ENCODE measurements at regions of chr7 and their contacts with region 1.

Region 1: DNA sequence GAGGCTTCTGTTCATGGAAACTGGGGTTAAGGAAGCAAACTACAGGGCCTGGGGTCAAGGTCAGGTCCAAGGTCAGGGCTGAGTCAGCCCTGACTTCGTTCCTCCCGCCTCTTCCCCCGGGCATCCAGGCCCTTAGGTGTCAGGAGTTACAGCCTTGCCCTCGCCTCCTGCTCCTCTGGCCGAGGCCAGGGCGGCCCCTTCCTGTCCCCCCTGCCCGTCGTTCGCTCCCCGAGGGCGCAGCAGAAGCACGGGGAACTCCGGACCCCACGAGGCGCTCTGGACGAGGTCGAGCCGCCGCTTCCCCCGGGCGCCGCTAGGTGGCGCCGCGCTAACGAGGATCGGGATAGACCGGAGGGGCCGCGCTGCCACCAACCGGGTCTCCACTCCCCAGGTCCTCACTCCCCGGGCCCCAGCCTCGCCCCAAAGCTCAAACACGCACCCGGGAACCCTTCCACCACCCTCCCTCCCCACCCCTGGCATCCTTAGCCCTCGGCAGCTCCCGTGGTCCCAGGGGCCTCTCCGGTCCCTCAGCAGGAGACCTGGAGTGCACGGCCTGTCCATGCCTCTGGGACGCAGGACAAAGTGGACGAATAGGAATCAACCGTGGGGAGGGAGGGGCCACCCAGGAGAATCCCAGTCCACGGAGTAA is 59.2 kb upstream of the MYL10 start:
- DNase-seq: peak; percentile 89
- ATAC-seq: peak; percentile 92
- H3K4me3 ChIP-seq: no peak overlapping the region
- H3K27ac ChIP-seq: no peak overlapping the region
- H3K4me1 ChIP-seq: peaks cover 9% of the 10 kb centered on the region
- H3K27me3 ChIP-seq: no peaks in the 10 kb centered on the region
- CTCF ChIP-seq: peak; percentile 98

Region 2: DNA sequence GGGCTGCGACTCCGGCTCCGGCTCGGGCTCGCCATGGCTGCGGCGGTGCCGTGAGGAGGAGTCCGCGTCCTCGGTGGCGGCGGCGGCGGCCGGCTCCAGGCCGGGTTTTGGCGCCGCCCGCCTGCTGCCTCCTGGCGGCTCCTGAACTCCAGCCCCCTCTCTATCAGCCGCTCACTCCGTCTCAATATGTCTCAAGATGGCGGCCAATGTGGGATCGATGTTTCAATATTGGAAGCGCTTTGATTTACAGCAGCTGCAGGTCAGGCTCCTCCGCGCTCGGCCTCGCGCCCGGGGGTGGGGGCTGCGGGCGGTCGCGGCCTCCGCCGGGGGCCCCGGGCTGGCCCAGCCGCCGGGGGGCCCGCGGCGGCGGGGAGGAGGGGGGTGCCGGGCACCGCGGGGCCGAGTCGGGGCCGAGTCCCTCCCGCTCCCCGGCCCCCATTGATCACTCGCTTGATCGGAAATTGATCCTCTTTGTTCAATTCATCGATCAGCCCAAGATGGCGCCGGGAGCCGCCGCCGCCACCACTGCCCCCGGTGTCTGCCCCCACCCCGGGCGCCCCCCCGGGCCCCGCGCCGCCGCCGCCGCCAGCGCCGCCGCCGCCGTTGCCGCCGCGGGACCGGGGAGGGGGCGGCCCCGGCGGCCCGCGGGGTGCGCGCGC is 127.7 kb after region 1 on chr7:
- intact Hi-C with region 1: loop called (anchors 10 kb)
- DNase-seq: peak; percentile 89
- ATAC-seq: peak; percentile 81
- H3K4me3 ChIP-seq: peak overlapping the region; percentile 51
- H3K27ac ChIP-seq: peak overlapping the region; percentile 73
- H3K4me1 ChIP-seq: peaks cover 25% of the 10 kb centered on the region
- H3K27me3 ChIP-seq: no peaks in the 10 kb centered on the region
- CTCF ChIP-seq: no peak

Measured in upper lobe of right lung (tissue), 1 donor.